Left colon (tissue), 2 donors: ENCODE measurements at regions of chr2 and their contacts with region 1.

Region 1: DNA sequence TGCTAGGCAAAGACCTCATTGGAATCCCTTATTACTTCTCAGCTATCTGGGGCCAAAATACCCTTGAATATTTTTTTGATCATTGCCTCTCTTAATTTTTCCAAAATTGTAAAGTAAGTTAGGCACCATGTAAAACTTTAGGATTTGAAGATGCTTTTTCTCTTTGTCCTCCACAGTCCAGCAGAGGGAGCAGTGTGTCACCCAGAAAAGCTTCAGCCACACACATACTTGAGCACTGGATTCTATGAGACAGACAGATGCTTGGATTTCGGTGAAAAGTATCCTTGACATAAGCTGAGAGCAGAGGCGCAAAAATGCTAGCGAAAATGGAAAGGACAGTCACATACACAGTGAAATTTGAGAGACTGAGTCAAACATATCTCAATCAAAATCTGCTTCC is 74.7 kb upstream of the KCNJ3 start:
- DNase-seq: peak in 1 of 2 donors; percentile 25
- ATAC-seq: peak; percentile 43

Region 2: DNA sequence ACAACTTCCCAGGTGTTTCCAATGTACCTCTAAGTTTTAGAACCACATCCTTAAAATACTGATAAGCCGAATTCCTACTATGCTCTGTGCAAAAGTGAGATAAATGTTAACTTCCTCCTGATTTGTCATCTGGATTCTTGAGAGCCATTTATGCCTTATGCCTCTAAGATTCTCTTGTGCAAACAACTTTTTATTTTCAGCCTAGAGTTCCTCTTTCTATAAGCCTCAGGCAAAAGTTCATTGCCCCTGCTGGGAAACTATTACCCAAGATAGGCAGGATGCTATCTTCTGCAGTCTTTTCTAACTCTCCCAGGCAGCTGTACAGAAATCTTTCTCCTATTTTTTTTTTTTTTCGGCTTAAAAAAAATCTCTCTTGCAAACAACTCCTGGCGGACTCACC is 290.7 kb after region 1 on chr2:
- intact Hi-C with region 1: no loop called
- DNase-seq: no peak
- ATAC-seq: no peak

Region 3: GRCh38 chr2:155310589-155310988 is 686.8 kb after region 1 on chr2:
- intact Hi-C with region 1: loop called in 1 of 2 experiments (anchors 10 kb)
- DNase-seq: no peak
- ATAC-seq: no peak

Region 4: DNA sequence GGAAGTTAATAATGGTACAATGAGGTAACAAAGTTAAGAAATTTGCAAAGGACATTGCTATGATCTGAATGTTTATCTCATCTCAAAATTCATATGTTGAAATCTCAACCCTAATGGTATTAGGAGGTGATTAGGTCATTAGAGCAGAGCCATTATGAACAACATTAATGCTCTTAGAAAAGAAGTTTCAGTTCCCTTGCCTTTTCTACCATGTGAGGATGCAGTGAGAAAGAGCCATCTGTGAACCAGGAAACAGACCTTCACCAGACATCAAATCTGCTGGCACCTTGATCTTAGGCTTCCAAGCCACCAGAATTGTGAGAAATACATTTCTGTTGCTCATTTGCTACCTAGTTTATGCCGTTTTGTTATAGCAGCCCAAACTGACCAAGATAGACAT is 951.1 kb after region 1 on chr2:
- intact Hi-C with region 1: no loop called
- DNase-seq: no peak
- ATAC-seq: no peak

Region 5: GRCh38 chr2:155944218-155944617 is 1320.4 kb after region 1 on chr2:
- intact Hi-C with region 1: no loop called
- DNase-seq: no peak
- ATAC-seq: no peak